SK-N-SH (cell line): ENCODE measurements at regions of chr3 and their contacts with region 1.

Region 1: DNA sequence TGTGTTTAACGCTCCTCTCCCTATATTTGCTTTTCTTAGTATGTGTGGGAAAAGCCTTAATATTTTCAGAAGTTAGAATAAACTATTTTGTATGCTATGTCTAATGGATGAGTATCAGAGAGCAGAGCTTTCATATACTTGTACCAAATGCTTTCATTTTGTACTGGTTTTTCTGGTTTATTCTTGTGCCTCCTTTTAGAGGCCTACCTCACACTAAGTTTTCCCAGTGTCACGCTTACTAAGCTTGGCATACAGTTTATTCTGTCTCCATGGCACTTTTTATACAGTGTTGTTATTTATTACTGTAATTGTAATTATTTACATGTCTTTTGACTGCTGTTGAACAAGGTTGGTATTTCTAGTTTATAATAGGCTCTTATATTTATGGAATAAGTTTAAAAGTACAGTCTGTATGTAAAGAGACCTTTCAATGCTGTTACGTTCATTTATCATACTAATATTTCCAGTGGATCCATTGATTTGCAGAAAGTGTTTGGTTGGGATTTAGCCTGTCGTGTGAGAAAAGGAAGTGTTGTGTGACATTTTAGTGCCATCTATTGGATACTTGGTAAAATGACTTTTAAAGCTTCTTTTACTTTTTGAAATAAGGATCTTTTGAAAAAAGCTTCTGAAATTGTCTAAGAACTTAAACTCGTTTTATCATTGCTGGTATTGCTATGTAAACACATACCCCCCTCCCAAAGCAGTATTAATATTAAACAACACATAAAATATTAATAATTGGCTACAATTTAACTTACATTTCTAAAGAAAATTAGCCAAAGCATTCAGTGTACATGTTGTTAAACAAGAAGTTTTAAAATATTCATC is 5.2 kb upstream of the EBLN2 start:
- DNase-seq: peak; percentile 42
- H3K4me3 ChIP-seq: no peak overlapping the region; a peak in 1 of 4 replicates
- H3K27ac ChIP-seq: peak overlapping the region in 1 of 2 experiments; percentile 54; a peak in 1 of 4 replicates
- H3K4me1 ChIP-seq: peaks cover 5 to 12% of the 10 kb centered on the region in 2 experiments; a peak in 3 of 4 replicates
- H3K27me3 ChIP-seq: no peaks in the 10 kb centered on the region
- CTCF ChIP-seq: peak; percentile 71
- EP300 ChIP-seq: no peak
- RAD21 ChIP-seq: peak; percentile 81

Region 2: DNA sequence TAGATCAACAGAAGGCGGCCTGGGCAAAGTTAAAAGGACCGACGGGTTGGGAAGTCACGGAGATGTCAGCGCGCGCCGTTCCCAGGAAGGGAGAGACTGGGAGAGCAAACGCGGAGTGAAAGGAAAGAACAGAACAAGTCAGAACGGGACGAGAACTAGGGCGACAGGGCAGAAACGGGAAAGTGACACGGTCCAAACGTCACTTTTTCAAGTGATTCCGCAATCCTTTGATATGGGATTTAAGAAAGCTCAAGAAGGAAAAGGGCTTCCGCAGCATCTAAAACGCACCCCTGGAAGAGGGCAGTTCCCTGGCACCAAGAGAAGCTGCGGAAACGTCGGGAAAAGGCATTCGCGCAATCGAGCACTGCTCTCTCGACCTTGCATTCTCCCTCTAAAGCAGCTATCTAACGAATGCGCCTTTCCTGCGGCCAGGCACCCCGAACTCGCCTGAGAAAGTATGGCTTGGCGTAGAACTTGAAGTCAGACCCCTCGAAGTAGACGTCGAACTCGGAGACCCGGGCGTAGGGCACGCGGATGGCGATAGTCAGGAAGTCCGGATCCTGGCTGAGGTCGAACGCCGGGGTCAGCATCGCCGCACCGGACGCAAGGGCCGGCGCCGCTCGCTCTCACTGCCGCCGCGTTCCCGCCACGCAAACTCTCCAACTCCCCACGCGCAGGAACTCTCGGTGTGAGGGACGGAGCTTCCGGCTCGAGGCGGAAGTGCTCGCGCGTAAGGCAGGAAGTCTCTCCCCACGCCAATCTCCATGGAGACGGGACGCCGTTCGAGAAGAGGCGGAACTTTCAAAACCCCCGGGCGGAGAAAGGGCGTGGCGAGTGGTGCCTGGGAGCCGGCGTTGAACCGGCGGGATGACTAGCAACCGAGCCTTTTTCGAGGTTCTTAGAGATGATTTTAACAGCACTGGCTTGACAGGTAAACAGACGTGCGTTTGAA is 208.2 kb before region 1 on chr3 and contains the start of gene SHQ1:
- CTCF ChIA-PET with region 1: interaction called, 55 read pairs
- POLR2A ChIA-PET with region 1: no interaction called
- DNase-seq: peak; percentile 93
- H3K4me3 ChIP-seq: peak within 1 kb of the TSS; percentile 94 to 97
- H3K27ac ChIP-seq: peak within 1 kb of the TSS; percentile 73 to 77
- H3K4me1 ChIP-seq: peaks cover 8 to 12% of the 10 kb centered on the region in 2 experiments; a peak in 3 of 4 replicates
- H3K27me3 ChIP-seq: no peaks in the 10 kb centered on the region
- CTCF ChIP-seq: no peak
- EP300 ChIP-seq: no peak
- RAD21 ChIP-seq: no peak
- polyA plus RNA-seq, gene SHQ1: 10.5 and 11.7 TPM in 2 replicates

Region 3: DNA sequence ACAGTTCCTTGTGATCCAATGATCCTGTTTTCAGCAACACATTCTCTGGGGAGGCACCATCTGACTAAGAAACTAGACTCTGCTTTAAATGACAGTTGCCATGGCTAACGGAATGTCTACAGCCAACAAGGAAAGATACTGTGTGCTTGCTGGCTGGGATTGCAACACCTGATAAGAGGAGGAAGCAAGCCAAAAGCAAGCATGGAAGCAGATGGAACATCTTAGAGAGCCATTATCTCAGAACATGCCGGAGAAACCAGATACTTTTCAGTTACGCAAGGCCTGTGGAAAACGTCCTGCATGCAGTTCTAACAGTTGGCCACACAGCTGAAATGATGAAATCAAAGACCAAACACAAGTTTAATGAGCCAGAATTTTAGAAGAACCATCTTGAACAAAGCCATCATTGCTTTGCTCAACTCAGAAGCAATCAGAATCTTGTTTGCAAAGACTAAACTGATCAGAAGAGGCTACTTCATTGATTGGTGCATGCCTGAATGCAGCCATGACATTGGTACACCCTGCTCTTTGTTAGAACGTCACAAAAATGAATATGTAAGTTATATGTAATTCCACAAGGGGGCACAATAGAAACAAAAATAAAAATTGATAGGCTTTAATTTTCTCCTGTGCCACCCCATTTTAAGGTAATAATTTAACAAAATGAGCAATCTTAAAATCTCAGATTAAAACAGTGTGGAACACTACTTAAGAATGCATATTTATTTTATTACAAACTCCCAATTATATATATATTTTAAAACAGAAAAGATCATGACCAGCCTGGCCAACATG is 117.6 kb before region 1 on chr3:
- CTCF ChIA-PET with region 1: interaction called, 69 read pairs
- POLR2A ChIA-PET with region 1: no interaction called
- DNase-seq: peak; percentile 74
- H3K4me3 ChIP-seq: no peak overlapping the region; a peak in 1 of 4 replicates
- H3K27ac ChIP-seq: peak overlapping the region; percentile 36 to 50
- H3K4me1 ChIP-seq: peaks cover 0 to 3% of the 10 kb centered on the region in 2 experiments; a peak in 2 of 4 replicates
- H3K27me3 ChIP-seq: no peaks in the 10 kb centered on the region
- CTCF ChIP-seq: peak; percentile 72
- EP300 ChIP-seq: no peak
- RAD21 ChIP-seq: peak; percentile 68

Region 4: DNA sequence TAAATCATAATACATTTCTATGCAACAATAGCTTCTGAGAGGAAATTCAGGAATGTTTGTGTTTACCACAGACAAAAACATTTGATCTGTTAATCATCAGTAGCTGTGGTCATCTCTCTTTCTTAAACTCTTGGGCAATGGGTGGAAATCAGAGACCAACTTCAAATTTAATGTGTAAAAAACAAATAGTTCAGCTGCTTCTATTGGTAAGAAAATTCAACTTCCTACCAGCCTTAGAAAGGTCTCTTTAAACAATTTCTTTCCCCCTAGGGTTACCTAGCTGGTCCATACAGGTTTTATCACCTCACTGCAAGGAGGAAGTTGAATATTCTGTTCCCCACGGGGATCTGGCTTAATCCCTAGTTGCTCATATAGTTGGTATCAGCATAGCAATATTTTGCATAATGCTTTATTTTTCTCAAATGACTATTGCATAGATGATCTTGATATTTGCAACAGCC is 79.9 kb before region 1 on chr3:
- CTCF ChIA-PET with region 1: interaction called, 10 read pairs
- POLR2A ChIA-PET with region 1: no interaction called
- DNase-seq: no peak
- H3K4me3 ChIP-seq: no peak overlapping the region
- H3K27ac ChIP-seq: no peak overlapping the region
- H3K4me1 ChIP-seq: no peaks in the 10 kb centered on the region
- H3K27me3 ChIP-seq: no peaks in the 10 kb centered on the region
- CTCF ChIP-seq: no peak
- EP300 ChIP-seq: no peak
- RAD21 ChIP-seq: no peak

Region 5: DNA sequence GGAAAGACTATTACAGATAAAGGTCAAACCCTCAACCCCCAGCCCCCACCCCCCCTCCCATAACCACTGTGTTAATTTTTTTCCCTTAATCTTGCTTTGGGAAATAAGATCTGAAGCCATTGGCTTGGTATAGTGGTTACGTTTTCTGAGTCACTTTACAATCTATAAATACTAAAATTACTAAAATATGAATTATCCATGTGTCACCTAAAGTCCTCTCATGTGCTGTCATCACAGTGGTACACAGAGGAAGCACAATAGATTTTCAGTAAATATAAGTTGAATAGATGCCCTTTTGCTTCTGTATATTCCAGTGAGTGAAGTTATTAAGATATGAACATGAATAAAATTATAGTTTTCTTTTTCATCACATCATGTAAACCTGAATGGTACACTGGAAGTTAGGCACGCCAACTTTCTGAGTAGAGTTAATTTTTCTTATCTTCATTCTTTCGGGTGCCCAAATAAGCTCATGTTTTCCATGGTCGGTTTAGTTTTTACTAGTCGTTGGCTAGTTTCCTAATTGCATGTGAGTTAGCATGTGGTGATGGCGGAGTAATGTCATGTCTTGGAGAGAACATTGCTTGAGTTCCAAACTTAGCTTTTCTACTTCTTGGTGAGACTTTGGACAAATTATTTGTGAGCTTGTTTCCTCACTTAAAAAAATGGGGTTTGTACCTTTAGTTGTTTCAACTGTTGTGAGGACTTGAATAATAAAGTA is 48.1 kb before region 1 on chr3:
- CTCF ChIA-PET with region 1: interaction called, 14 read pairs
- POLR2A ChIA-PET with region 1: no interaction called
- DNase-seq: no peak
- H3K4me3 ChIP-seq: no peak overlapping the region
- H3K27ac ChIP-seq: no peak overlapping the region
- H3K4me1 ChIP-seq: peaks cover 0 to 5% of the 10 kb centered on the region in 2 experiments; a peak in 2 of 4 replicates
- H3K27me3 ChIP-seq: no peaks in the 10 kb centered on the region
- CTCF ChIP-seq: no peak
- EP300 ChIP-seq: no peak
- RAD21 ChIP-seq: no peak

Region 6: DNA sequence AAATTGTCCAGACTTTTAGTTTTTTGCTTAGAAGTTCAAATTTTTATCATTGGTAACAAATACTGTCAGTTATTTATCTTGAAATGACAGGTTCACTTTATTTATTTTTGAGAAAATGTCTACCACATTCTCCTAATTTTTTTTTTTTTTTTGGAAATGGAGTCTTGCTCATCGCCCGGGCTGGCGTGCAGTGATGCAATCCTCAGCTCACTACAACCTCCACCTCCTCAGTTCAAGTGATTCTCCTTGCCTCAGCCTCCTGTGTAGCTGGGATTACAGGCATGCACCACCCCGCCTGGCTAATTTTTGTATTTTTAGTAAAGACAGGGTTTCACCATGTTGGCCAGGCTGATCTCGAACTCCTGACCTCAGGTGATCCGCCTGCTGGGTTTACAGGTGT is 10.8 kb before region 1 on chr3:
- CTCF ChIA-PET with region 1: interaction called, 15 read pairs
- POLR2A ChIA-PET with region 1: no interaction called
- DNase-seq: no peak
- H3K4me3 ChIP-seq: no peak overlapping the region
- H3K27ac ChIP-seq: no peak overlapping the region
- H3K4me1 ChIP-seq: peaks cover 2 to 6% of the 10 kb centered on the region in 2 experiments; a peak in 3 of 4 replicates
- H3K27me3 ChIP-seq: no peaks in the 10 kb centered on the region
- CTCF ChIP-seq: no peak
- EP300 ChIP-seq: no peak
- RAD21 ChIP-seq: no peak

Region 7: GRCh38 chr3:73086071-73086494 is 29.9 kb after region 1 on chr3:
- CTCF ChIA-PET with region 1: interaction called, 34 read pairs
- POLR2A ChIA-PET with region 1: no interaction called
- DNase-seq: peak; percentile 71
- H3K4me3 ChIP-seq: no peak overlapping the region; a peak in 1 of 4 replicates
- H3K27ac ChIP-seq: no peak overlapping the region
- H3K4me1 ChIP-seq: no peaks in the 10 kb centered on the region
- H3K27me3 ChIP-seq: no peaks in the 10 kb centered on the region
- CTCF ChIP-seq: peak; percentile 85
- EP300 ChIP-seq: no peak
- RAD21 ChIP-seq: peak; percentile 97